Heart left ventricle (tissue), 16 donors: ENCODE measurements at regions of chr5 and their contacts with region 1.

Region 1: DNA sequence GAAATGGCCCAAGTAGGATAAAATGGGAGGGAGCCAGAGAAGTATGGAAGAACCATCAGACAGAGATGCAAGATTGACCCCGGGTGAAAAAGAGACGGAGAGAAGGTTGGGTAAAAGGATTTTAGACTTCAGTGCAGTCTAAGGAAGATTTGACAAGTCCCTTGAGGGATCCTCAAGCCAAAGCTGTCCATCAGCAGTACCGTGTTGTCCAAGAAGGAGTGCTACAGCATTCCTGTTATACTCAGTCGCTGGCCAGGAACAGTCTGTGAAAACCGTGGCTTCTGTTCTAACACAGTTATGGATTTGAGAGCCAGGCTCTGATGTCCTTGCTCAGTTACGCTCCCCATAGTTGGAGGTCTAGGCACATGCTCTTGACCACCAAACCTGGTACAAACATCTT is 383.9 kb upstream of the DAB2 start:
- DNase-seq: no peak
- ATAC-seq: no peak
- H3K4me3 ChIP-seq: no peak overlapping the region
- H3K27ac ChIP-seq: no peak overlapping the region
- H3K4me1 ChIP-seq: no peaks in the 10 kb centered on the region
- H3K27me3 ChIP-seq: no peaks in the 10 kb centered on the region
- CTCF ChIP-seq: no peak
- POLR2A ChIP-seq: no peak

Region 2: DNA sequence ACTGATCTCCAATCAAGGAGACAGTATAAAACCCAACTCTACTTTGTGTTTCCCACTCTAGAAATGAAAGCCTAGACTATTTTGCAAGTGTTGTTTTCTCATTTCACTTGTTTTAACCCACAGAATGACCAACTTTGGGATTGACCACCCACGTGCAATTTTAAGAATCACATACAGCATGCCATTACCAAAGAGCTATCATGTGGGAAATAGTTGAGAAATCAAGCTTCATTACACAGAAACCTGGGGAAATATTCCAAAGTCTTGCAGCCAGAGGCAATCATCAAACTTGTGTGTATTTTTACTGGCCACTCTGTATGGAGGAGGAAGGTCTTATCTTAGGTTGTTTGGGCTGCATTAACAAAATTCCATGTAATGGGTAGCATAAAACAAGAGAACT is 67.5 kb after region 1 on chr5:
- intact Hi-C with region 1: loop called in 1 of 10 experiments (anchors 2 kb)
- DNase-seq: no peak
- ATAC-seq: no peak
- H3K4me3 ChIP-seq: no peak overlapping the region
- H3K27ac ChIP-seq: no peak overlapping the region
- H3K4me1 ChIP-seq: no peaks in the 10 kb centered on the region
- H3K27me3 ChIP-seq: no peaks in the 10 kb centered on the region
- CTCF ChIP-seq: no peak
- POLR2A ChIP-seq: no peak